K562 (cell line): ENCODE measurements at regions of chr3 and their contacts with region 1.

Region 1: DNA sequence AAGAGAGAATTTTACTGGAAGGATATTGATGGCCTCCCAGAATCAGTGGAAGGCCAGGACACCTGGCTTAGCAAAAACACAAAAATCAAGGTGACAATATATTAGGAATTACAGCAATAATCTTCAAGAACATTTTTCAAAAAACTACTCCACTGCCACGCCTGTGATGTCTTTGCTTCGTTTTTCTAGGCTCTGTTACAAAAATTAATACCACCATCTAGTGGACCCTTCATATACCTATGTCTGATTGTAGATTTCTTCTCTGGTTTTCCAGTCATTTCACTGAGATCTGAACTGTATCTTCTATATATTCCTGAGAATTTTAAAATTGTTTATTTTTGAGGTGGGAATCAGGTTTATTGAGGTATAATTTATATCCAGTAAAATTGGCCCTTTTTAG is 5.6 kb upstream of the SLC33A1 start:
- DNase-seq: peak in 2 of 4 experiments; percentile 30 to 42
- ATAC-seq: peak; percentile 56
- H3K4me3 ChIP-seq: no peak overlapping the region
- H3K27ac ChIP-seq: no peak overlapping the region
- H3K4me1 ChIP-seq: peaks cover 13 to 16% of the 10 kb centered on the region in 2 experiments; a peak in 3 of 5 replicates
- H3K27me3 ChIP-seq: no peaks in the 10 kb centered on the region
- CTCF ChIP-seq: peak; percentile 30 to 73 (median 38); a peak in 4 of 6 replicates
- EP300 ChIP-seq: no peak
- POLR2A ChIP-seq: no peak
- RAD21 ChIP-seq: peak; percentile 70 to 80

Region 2: GRCh38 chr3:155352900-155353490 is 506.9 kb before region 1 on chr3:
- CTCF ChIA-PET with region 1: no interaction called
- POLR2A ChIA-PET with region 1: no interaction called
- in situ Hi-C with region 1: loop called (anchors 25 kb)
- intact Hi-C with region 1: loop called (anchors 10 kb)
- DNase-seq: peak in 2 of 4 experiments; percentile 42 to 52
- ATAC-seq: peak; percentile 74
- H3K4me3 ChIP-seq: no peak overlapping the region
- H3K27ac ChIP-seq: no peak overlapping the region
- H3K4me1 ChIP-seq: no peaks in the 10 kb centered on the region; a peak in 1 of 5 replicates
- H3K27me3 ChIP-seq: no peaks in the 10 kb centered on the region
- CTCF ChIP-seq: peak; percentile 41 to 75 (median 47); a peak in 4 of 6 replicates
- EP300 ChIP-seq: no peak
- POLR2A ChIP-seq: no peak
- RAD21 ChIP-seq: peak; percentile 77 to 81

Region 3: GRCh38 chr3:155753036-155753639 is 106.7 kb before region 1 on chr3:
- CTCF ChIA-PET with region 1: interaction called, 3 read pairs
- POLR2A ChIA-PET with region 1: no interaction called
- in situ Hi-C with region 1: no loop called
- intact Hi-C with region 1: loop called (anchors 1 kb)
- DNase-seq: peak in 2 of 4 experiments; percentile 39 to 57
- ATAC-seq: peak; percentile 89
- H3K4me3 ChIP-seq: no peak overlapping the region
- H3K27ac ChIP-seq: no peak overlapping the region
- H3K4me1 ChIP-seq: peaks cover 0 to 5% of the 10 kb centered on the region in 2 experiments; a peak in 2 of 5 replicates
- H3K27me3 ChIP-seq: no peaks in the 10 kb centered on the region
- CTCF ChIP-seq: peak; percentile 48 to 81 (median 50); a peak in 4 of 6 replicates
- EP300 ChIP-seq: no peak
- POLR2A ChIP-seq: no peak
- RAD21 ChIP-seq: peak; percentile 71 to 92